Activated CD4-positive, alpha-beta T cell treated with anti-CD3 and anti-CD28 coated beads, Interleukin-2, amount 10 ng/mL, durations not matched to agents 7 days and 5 days (primary cell): ENCODE measurements at regions of chr10 and their contacts with region 1.

Region 1: GRCh38 chr10:10138685-10139084 is 879.0 kb upstream of the CELF2 start:
- DNase-seq: peak; percentile 12
- H3K4me3 Mint-ChIP-seq: peak overlapping the region; percentile 67
- H3K27ac Mint-ChIP-seq: peak overlapping the region; percentile 86
- H3K4me1 Mint-ChIP-seq: peaks cover 12% of the 10 kb centered on the region
- H3K27me3 Mint-ChIP-seq: peaks cover 2% of the 10 kb centered on the region

Region 2: DNA sequence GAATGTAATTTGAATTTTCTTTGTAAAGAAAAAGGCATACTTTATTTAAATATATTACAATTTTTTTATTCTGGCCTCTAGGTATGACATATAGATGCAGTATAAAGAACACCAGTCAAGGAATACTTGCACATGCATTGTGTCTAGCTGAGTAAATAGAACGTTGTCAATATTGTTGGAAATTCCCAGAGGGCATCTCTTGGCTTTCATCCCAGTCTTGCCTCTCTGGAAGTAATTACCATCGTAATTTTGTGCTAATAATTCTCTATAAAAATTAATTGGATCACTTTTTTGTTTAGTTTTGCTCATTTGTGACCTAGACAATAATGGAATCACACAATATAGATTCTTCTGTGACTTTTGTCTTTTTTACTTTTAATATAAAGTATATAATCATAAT is 173.3 kb before region 1 on chr10:
- CTCF ChIA-PET with region 1: no interaction called
- POLR2A ChIA-PET with region 1: no interaction called
- DNase-seq: no peak
- H3K4me3 Mint-ChIP-seq: no peak overlapping the region
- H3K27ac Mint-ChIP-seq: no peak overlapping the region
- H3K4me1 Mint-ChIP-seq: no peaks in the 10 kb centered on the region
- H3K27me3 Mint-ChIP-seq: no peaks in the 10 kb centered on the region

Region 3: DNA sequence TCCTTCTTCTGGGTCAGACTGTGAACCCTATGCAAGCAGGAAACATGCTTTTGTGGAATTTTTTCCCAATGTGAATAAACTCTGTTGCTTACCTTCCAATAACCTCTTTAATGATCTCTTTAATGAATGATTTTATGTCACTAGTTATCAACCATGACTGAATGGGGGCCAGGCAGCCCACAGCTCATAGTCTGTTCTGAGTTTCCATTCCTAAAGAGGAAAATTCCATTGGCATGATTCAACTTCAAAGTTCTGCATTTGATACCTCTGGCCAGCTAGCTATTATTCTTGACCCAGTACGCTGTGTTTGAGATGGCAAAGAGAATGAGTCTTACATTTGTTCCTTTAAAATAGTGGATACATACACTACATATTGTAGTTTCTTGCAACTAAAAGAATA is 11.2 kb after region 1 on chr10:
- CTCF ChIA-PET with region 1: no interaction called
- POLR2A ChIA-PET with region 1: no interaction called
- DNase-seq: no peak
- H3K4me3 Mint-ChIP-seq: no peak overlapping the region
- H3K27ac Mint-ChIP-seq: no peak overlapping the region
- H3K4me1 Mint-ChIP-seq: no peaks in the 10 kb centered on the region
- H3K27me3 Mint-ChIP-seq: no peaks in the 10 kb centered on the region

Region 4: DNA sequence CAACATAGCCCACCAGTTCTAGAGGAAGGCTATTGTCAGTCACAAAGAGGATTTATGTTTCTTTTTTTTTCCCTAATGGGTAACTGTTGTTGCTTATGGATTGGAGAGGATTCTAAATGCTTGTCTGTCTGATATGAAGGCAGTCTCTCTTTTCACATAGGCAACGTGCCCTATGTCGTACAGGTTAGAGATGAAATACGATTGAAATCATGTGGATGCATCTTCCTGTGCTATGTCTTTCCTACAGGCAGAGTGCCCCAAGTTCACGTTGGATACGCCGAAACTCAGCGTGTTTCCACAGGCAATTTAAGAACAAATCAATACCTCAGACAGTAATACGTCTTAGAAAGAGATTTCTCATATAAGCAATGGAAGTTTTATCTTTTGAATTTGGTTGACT is 972.8 kb after region 1 on chr10:
- CTCF ChIA-PET with region 1: no interaction called
- POLR2A ChIA-PET with region 1: interaction called, 11 read pairs
- DNase-seq: no peak
- H3K4me3 Mint-ChIP-seq: no peak overlapping the region
- H3K27ac Mint-ChIP-seq: no peak overlapping the region
- H3K4me1 Mint-ChIP-seq: peaks cover 11% of the 10 kb centered on the region
- H3K27me3 Mint-ChIP-seq: no peaks in the 10 kb centered on the region